Activated T-helper 1 cell treated with anti-CD3 and anti-CD28 coated beads, Interleukin-12 subunit alpha, Interleukin-12 subunit beta, Interleukin-2, Interleukin-4 antibody, amounts not matched to agents 30 ng/mL and 10 ng/mL and 1 ng/mL, durations not matched to agents 14 hours and 24 hours and 36 hours (primary cell): ENCODE measurements at regions of chr19 and their contacts with region 1.

Region 1: DNA sequence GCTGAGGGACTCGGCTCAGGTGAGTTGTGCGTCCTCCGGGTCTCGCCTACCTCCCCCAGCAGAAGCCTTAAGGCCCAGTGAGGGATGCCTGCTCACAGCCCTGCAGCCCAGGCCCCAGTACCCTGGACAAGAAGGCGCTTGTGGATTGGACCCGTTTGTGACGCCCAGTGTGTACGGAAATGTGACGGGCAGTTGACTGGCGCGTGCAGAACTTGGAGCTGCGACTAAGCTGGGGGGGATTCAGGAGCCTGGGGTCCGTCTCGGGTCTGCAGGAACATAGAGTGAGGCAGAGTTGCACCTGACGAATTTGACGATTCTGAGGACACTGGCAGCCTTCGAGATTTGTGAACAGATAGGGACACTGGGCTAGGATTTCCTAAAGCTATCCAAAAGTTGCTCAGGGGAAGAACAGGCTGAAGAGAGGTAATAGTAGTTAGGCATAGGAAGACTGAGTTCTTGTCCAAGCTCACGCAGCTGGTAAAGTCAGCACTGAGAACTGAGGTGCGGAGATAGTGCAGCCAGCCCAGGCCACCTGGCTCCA is 519 bp downstream of the ZNF551 start:
- DNase-seq: no peak
- H3K4me3 Mint-ChIP-seq: peak overlapping the region; percentile 96
- H3K27ac Mint-ChIP-seq: peak overlapping the region; percentile 92
- H3K4me1 Mint-ChIP-seq: peaks cover 22% of the 10 kb centered on the region
- H3K27me3 Mint-ChIP-seq: no peaks in the 10 kb centered on the region

Region 2: DNA sequence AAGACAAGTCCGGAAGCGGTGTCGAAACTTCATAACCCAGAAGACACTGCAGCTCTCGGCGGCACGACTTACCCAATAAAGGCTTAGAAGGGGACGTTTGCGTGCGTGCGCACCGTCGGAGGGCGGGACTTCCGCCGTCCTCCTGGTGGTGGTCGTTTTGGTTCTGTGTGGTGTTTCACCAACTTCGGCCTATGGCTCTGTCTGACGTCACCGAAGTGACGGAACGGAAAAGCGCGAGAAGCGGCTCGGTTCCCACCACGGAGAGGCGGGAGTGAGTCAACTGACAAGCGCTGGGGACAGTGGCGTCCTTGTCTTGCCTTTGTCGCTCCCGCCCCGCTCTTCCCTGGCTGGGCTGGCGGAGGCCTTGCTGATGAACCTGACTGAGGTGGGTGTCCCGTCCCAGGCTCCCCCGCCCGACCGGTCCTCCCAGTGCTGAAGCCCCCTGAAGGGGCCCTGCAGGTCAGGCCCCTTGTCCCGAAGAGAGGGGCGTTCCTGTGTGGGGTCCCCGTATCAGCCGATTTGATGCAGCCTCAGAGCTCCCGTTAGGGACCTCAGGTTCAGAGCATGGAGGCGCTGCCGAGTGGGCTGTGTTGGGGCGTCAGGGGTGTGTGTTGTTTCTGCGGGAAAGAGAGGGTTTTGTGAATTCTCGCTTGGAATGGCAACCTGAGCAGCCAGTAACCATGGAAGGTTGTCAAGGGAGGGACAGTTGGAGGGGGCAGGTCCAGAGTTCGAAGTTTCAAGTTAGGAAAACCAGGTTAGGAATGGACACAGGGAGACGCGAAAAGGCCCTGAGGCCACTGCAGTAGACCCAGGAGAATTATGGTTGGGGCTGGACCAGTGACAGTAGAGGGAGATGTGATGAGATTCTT is 292.3 kb before region 1 on chr19 and contains the start of gene ZNF548:
- intact Hi-C with region 1: loop called (anchors 1 kb)
- DNase-seq: peak; percentile 92
- H3K4me3 Mint-ChIP-seq: peak within 1 kb of the TSS; percentile 94
- H3K27ac Mint-ChIP-seq: peak within 1 kb of the TSS; percentile 94
- H3K4me1 Mint-ChIP-seq: peaks cover 30% of the 10 kb centered on the region
- H3K27me3 Mint-ChIP-seq: no peaks in the 10 kb centered on the region
- total RNA-seq, gene ZNF548: 11.3 and 12.1 TPM in 2 replicates

Region 3: GRCh38 chr19:57583521-57584416 is 98.5 kb before region 1 on chr19 and contains the start of gene ZIK1:
- intact Hi-C with region 1: loop called (anchors 1 kb)
- DNase-seq: peak; percentile 81
- H3K4me3 Mint-ChIP-seq: peak within 1 kb of the TSS; percentile 92
- H3K27ac Mint-ChIP-seq: peak within 1 kb of the TSS; percentile 81
- H3K4me1 Mint-ChIP-seq: peaks cover 20% of the 10 kb centered on the region
- H3K27me3 Mint-ChIP-seq: no peaks in the 10 kb centered on the region
- total RNA-seq, gene ZIK1: 3.9 and 4.0 TPM in 2 replicates

Region 4: DNA sequence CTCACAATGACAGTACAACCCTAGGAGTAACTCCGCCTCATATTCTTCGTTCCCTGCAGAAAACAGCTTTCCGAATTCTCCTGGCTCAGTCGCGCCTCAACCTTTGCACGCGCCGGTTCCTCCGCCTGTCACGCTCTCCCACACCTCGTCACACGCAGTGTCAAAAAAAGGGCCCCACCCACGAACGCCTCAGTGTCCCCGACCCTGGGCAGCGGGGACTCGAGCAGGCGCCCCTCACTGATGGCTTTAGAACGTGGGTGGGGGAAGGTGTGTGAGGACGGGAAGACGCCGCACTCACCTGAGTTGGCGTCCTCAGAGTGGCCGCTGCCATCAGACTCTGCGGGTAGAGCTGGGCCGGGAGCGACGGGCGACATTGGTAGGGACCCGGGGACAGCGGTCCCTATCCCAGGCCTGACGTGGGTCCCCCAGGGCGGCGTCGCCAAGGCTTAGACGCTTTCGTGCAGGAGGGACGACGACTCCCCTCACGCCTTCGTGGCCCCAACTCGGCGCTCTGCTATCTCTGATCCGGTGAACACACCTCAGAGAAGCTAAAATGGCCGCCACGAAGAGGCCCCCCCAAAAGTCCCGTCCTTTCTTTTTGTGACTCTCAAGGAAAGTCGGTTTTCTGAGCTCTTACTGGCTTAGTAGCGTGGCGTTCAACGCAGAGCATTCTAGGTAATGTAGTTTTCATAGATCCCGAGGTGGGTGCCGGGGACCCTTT is 26.5 kb after region 1 on chr19 and contains the start of gene ZNF154:
- intact Hi-C with region 1: loop called (anchors 2 kb)
- DNase-seq: peak; percentile 21
- H3K4me3 Mint-ChIP-seq: peak within 1 kb of the TSS; percentile 92
- H3K27ac Mint-ChIP-seq: peak within 1 kb of the TSS; percentile 87
- H3K4me1 Mint-ChIP-seq: peaks cover 9% of the 10 kb centered on the region
- H3K27me3 Mint-ChIP-seq: no peaks in the 10 kb centered on the region
- total RNA-seq, gene ZNF154: 4.6 and 4.7 TPM in 2 replicates

Region 5: GRCh38 chr19:57819475-57820148 is 137.3 kb after region 1 on chr19:
- intact Hi-C with region 1: loop called (anchors 1 kb)
- DNase-seq: peak; percentile 76
- H3K4me3 Mint-ChIP-seq: peak overlapping the region; percentile 99
- H3K27ac Mint-ChIP-seq: peak overlapping the region; percentile 98
- H3K4me1 Mint-ChIP-seq: peaks cover 50% of the 10 kb centered on the region
- H3K27me3 Mint-ChIP-seq: no peaks in the 10 kb centered on the region